ENCODE measurements at regions of chr1 and their contacts with region 1.

Region 1: DNA sequence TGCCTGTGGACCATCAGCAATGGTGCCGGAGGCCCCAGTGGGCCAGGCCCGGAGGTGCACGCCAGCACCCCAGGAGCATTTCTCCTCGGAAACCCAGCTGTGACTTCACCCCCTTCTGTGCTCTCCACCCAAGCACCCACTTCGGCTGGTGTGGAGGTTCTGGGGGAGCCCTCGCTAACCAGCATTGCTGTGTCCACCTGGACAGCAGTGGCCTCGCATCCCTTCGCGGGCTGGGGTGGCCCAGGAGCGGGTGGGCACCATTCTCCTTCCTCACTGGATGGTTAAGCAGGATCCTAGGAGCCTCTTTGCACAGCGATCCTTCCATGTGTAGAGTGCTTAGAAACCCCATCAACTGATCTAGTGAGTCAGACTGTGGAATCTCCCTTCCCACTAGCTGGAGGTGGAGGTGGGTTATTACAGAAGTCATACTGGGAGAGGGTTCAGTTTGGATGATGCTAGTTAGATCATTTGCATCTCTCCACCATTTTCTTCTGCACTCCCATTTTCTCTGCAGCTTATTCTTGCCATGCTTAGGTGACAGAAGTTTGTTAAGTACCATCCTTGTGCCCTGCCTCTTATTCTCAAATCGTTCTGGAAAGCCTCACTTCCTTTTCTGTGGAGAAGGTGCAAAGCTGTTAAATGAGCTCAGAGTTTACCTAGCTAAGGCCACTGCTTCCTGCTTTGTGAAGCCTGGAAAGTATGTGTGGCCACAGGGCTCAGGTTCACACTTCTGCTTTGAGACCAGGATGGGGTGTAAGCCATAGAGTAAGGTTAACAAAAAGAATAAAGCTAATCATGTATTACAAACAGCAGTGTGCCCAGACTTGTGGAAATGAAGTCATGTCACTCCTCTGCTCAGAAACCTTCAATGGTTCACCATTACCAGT is 32.3 kb downstream of the TBX19 start:
- DNase-seq: no peak
- ATAC-seq: no peak
- H3K4me3 ChIP-seq: no peak overlapping the region
- H3K27ac ChIP-seq: no peak overlapping the region
- H3K4me1 ChIP-seq: peaks cover 0 to 4% (median 0%) of the 10 kb centered on the region in 9 donors
- H3K27me3 ChIP-seq: no peaks in the 10 kb centered on the region
- CTCF ChIP-seq: no peak

Region 2: DNA sequence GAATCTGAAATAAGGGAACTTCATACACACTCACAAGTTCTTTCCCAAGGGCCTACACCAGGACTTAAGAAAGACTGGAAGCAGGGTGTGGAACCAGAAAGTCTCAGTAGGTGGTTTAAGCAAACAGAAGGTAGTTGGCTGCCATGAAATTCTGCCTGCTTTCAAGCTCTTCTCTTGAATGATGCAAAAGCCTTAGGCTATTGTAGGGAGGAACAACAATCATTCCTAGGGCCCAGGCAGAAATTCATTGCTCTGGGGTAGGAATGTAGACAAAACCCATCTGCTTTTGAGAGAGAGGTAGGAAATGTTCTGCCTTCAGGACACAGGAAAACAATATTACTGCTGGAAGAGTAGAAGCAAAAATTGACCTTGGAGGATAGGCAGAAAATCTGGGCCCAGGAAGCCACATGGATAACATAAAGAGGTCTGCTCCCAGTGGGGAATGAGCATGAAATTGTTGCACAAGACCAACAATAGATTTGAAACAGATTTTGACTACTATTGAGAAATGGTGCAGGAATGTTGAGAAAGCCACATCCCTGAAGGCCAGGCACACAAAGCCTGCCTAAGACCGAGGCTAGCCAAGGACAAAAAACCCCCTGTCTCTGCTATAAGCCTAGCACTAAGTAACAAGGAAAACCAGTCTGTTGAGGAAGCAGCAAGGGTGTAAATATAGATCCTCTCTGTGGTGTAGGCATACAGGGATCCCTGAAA is 109.9 kb before region 1 on chr1:
- intact Hi-C with region 1: no loop called
- DNase-seq: no peak
- ATAC-seq: peak in 2 of 8 donors; percentile 49 to 86
- H3K4me3 ChIP-seq: no peak overlapping the region
- H3K27ac ChIP-seq: peak overlapping the region in 2 of 10 donors; percentile 1 to 17
- H3K4me1 ChIP-seq: no peaks in the 10 kb centered on the region
- H3K27me3 ChIP-seq: no peaks in the 10 kb centered on the region
- CTCF ChIP-seq: no peak

Region 3: GRCh38 chr1:168280296-168280927 is 32.5 kb before region 1 on chr1 and contains the start of gene TBX19:
- intact Hi-C with region 1: loop called in 1 of 10 experiments (anchors 2 kb)
- DNase-seq: no peak
- ATAC-seq: no peak
- H3K4me3 ChIP-seq: no peak within 1 kb of the TSS
- H3K27ac ChIP-seq: no peak within 1 kb of the TSS
- H3K4me1 ChIP-seq: no peaks in the 10 kb centered on the region
- H3K27me3 ChIP-seq: no peaks in the 10 kb centered on the region
- CTCF ChIP-seq: no peak
- total RNA-seq, gene TBX19: 0.21 to 0.56 (median 0.39) TPM

Region 4: DNA sequence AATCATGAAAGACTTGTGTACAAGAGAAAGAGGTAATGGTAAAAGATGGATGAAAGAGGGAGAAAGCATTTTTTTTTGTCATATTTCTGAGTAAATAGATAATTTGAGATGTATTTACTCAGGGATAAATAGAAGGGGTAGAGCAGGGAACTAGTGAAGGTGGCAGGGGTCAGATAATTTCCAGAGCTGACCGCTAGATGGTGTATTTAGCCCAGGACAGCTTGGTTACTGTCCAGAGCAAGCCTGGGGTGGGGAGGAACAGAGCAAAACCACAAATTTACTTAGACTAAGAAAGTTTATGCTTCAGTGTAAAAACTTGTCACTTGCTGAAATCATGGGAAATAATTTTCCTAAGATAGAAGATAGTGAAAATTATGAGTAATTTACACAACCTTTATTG is 139.4 kb after region 1 on chr1:
- intact Hi-C with region 1: no loop called
- DNase-seq: no peak
- ATAC-seq: no peak
- H3K4me3 ChIP-seq: no peak overlapping the region
- H3K27ac ChIP-seq: no peak overlapping the region
- H3K4me1 ChIP-seq: no peaks in the 10 kb centered on the region
- H3K27me3 ChIP-seq: no peaks in the 10 kb centered on the region
- CTCF ChIP-seq: no peak

Measured in heart right ventricle (tissue), 16 donors.